ENCODE measurements at regions of chr9 and their contacts with region 1.

Region 1: GRCh38 chr9:73081979-73082657 is 69.5 kb upstream of the ANXA1 start:
- DNase-seq: no peak
- H3K4me3 ChIP-seq: no peak overlapping the region
- H3K27ac ChIP-seq: peak overlapping the region in 3 of 4 donors; percentile 32 to 59 (median 46)
- H3K4me1 ChIP-seq: peaks cover 0 to 40% (median 30%) of the 10 kb centered on the region in 4 donors
- H3K27me3 ChIP-seq: no peaks in the 10 kb centered on the region
- CTCF ChIP-seq: peak; percentile 52 to 88 (median 73)
- EP300 ChIP-seq: no peak
- POLR2A ChIP-seq: no peak

Region 2: GRCh38 chr9:71911253-71912074 is 1170.7 kb before region 1 on chr9 and contains the start of gene C9orf85:
- intact Hi-C with region 1: loop called (anchors 10 kb)
- DNase-seq: peak; percentile 99
- H3K4me3 ChIP-seq: peak within 1 kb of the TSS; percentile 83 to 98 (median 90)
- H3K27ac ChIP-seq: peak within 1 kb of the TSS; percentile 92 to 97 (median 96)
- H3K4me1 ChIP-seq: peaks cover 0 to 34% (median 27%) of the 10 kb centered on the region in 4 donors
- H3K27me3 ChIP-seq: no peaks in the 10 kb centered on the region
- CTCF ChIP-seq: no peak
- EP300 ChIP-seq: no peak
- POLR2A ChIP-seq: peak in 1 of 2 donors; percentile 16
- total RNA-seq, gene C9orf85: 8.8 to 13.3 (median 12.2) TPM

Region 3: GRCh38 chr9:72807765-72808445 is 274.2 kb before region 1 on chr9:
- intact Hi-C with region 1: no loop called
- DNase-seq: no peak
- H3K4me3 ChIP-seq: no peak overlapping the region
- H3K27ac ChIP-seq: no peak overlapping the region
- H3K4me1 ChIP-seq: no peaks in the 10 kb centered on the region
- H3K27me3 ChIP-seq: no peaks in the 10 kb centered on the region
- CTCF ChIP-seq: no peak
- EP300 ChIP-seq: no peak
- POLR2A ChIP-seq: no peak

Region 4: DNA sequence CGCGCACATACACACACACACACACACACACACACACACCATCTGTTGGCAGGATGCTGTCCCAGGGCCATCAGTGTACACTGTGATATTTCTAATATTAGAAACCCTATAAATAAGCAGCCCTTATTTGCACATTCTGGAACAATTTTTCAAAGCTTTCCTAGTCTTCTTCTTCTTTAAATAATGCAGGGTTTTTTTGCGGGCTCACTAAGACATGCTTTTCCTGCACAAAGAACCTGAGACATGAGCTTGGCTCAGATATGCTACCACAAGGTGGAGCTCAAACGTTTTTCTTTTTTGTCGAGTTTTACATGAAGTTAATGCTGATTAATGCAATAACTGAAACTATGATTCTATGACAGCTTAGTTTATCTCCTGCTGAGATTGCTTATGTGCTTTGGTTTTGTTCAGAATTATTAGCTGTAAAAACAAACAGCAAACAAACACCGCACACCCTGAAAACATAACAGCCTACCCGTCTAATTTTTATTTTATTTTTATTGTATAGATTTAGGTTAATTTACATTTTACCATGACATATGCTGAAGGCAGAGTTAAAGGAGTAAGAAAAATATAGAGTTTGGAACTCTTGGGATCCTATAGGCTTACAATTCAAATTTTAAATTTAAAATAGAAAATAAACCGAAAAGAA is 225.0 kb before region 1 on chr9:
- intact Hi-C with region 1: loop called (anchors 2 kb)
- DNase-seq: no peak
- H3K4me3 ChIP-seq: no peak overlapping the region
- H3K27ac ChIP-seq: peak overlapping the region in 2 of 4 donors; percentile 19 to 28
- H3K4me1 ChIP-seq: peaks cover 0 to 36% (median 19%) of the 10 kb centered on the region in 4 donors
- H3K27me3 ChIP-seq: no peaks in the 10 kb centered on the region
- CTCF ChIP-seq: peak; percentile 65 to 74 (median 66)
- EP300 ChIP-seq: no peak
- POLR2A ChIP-seq: no peak

Region 5: DNA sequence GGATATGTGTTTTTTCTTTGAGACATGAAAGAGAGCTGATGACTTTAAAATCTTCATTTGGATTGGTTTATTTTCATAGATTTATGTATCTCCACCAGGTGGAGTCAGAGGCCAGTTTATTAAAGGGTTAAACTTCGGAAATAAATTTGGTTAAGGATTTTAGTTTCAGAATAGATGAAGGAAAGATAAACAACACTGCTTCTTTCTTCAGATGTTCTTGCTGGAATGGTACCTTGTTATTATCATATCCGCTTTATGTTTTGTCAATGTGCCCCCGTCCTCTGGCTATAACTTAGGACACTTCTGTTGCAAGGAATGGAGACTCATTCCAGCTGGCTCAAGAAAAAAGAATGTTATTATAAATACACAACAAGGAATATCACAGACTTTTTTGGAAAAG is 210.4 kb before region 1 on chr9:
- intact Hi-C with region 1: loop called (anchors 5 kb)
- DNase-seq: no peak
- H3K4me3 ChIP-seq: no peak overlapping the region
- H3K27ac ChIP-seq: peak overlapping the region in 3 of 4 donors; percentile 7 to 72 (median 57)
- H3K4me1 ChIP-seq: peaks cover 0 to 46% (median 33%) of the 10 kb centered on the region in 4 donors
- H3K27me3 ChIP-seq: no peaks in the 10 kb centered on the region
- CTCF ChIP-seq: peak; percentile 31 to 44 (median 42)
- EP300 ChIP-seq: no peak
- POLR2A ChIP-seq: no peak

Region 6: GRCh38 chr9:72952914-72953313 is 129.2 kb before region 1 on chr9 and contains the start of gene ALDH1A1:
- intact Hi-C with region 1: loop called (anchors 5 kb)
- DNase-seq: no peak
- H3K4me3 ChIP-seq: peak within 1 kb of the TSS; percentile 44 to 58 (median 49)
- H3K27ac ChIP-seq: peak within 1 kb of the TSS; percentile 64 to 88 (median 80)
- H3K4me1 ChIP-seq: peaks cover 0 to 30% (median 16%) of the 10 kb centered on the region in 4 donors
- H3K27me3 ChIP-seq: no peaks in the 10 kb centered on the region
- CTCF ChIP-seq: no peak
- EP300 ChIP-seq: no peak
- POLR2A ChIP-seq: peak; percentile 55 to 74
- total RNA-seq, gene ALDH1A1: 241 to 353 (median 300) TPM

Region 7: DNA sequence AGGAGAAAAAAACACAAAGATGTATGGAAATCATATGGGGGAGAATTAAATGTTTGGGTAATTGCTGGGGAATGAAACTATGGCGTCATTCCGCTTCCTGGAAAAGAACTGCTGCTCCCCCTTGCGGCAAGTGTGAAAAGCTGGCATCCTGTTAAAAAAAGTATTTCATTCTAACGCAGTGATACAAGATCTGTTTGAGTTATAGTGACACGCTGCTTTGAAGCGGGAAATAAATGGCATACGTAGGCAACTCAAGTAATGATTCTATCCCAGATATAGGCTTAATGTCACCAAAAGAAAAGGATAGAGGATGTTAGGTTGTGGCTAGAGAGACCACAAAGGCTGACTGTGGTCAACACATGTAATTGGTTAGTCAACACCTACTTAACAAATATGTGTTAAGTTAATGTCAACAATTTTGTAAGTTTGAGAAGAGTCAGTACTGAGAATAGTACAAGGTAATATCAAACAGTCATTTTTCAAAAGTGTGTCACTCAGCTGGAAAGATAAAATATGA is 59.0 kb before region 1 on chr9:
- intact Hi-C with region 1: loop called (anchors 2 kb)
- DNase-seq: peak; percentile 75
- H3K4me3 ChIP-seq: no peak overlapping the region
- H3K27ac ChIP-seq: peak overlapping the region in 3 of 4 donors; percentile 42 to 61 (median 45)
- H3K4me1 ChIP-seq: peaks cover 0 to 18% (median 12%) of the 10 kb centered on the region in 4 donors
- H3K27me3 ChIP-seq: no peaks in the 10 kb centered on the region
- CTCF ChIP-seq: peak; percentile 81 to 85 (median 84)
- EP300 ChIP-seq: no peak
- POLR2A ChIP-seq: no peak

Region 8: DNA sequence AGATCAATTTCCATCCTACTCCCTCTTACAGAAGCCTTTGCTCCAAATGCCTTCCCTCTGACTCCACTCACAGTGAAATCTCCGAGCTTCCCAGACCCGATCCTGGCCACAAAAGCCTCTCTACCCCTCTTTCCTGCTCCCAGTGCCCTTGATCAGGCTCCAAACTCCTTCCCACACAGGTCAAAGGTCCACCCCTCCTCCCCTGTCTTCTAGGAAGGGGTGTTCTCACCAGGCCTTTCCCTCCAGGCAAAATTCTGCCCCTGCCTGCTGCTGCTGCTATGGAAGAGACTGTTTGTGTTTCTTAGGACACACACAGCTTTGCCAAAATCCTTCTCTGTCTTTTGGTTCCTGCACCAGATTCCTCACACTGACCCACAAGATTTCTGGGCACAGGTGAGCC is 43.5 kb before region 1 on chr9:
- intact Hi-C with region 1: loop called (anchors 5 kb)
- DNase-seq: peak; percentile 84
- H3K4me3 ChIP-seq: peak overlapping the region in 3 of 4 donors; percentile 1 to 13 (median 4)
- H3K27ac ChIP-seq: peak overlapping the region; percentile 83 to 88 (median 86)
- H3K4me1 ChIP-seq: peaks cover 0 to 53% (median 44%) of the 10 kb centered on the region in 4 donors
- H3K27me3 ChIP-seq: no peaks in the 10 kb centered on the region
- CTCF ChIP-seq: no peak
- EP300 ChIP-seq: no peak
- POLR2A ChIP-seq: no peak

Measured in sigmoid colon (tissue), 7 donors.